ENCODE measurements at regions of chr10 and their contacts with region 1.

Region 1: DNA sequence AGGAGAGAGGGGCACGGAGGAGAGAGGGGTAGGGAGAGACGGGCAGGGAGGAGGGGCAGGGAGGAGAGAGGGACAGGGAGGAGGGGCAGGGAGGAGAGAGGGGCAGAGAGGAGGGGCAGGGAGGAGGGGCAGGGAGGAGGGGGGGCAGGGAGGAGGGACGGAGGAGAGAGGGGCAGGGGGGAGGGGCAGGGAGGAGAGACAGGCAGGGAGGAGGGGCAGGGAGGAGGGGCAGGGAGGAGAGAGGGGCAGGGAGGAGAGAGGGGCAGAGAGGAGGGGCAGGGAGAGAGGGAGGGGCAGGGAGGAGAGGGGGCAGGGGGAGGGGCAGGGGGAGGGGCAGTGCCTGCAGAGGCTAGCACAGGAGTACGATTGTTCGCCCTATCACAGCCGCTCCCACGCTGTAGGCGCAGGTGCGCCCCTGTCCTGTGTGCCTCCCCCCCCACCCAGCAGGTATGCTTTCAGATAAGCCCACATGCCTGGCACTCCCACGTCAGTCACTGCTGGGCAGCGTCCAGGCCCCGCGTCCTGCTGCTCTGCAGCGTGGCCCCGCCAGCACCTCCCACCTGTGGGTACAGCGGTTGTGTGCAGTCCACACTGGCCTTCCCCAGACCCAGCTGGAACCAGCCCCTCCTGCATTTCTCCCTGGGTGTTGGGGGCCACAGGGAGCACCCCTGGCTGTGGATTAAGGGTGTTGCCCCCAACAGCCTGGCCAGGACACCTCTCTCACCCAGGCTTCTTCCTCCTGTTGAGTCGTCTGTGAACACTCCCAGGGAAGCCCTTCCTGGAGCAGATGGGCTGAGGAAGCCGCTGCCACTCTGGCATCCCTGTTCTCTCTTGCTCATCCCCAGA is 10.8 kb downstream of the NKX6-2 start:
- DNase-seq: no peak
- H3K4me3 ChIP-seq: no peak overlapping the region
- H3K27ac ChIP-seq: no peak overlapping the region
- H3K4me1 ChIP-seq: no peaks in the 10 kb centered on the region
- H3K27me3 ChIP-seq: no peaks in the 10 kb centered on the region
- CTCF ChIP-seq: no peak

Region 2: DNA sequence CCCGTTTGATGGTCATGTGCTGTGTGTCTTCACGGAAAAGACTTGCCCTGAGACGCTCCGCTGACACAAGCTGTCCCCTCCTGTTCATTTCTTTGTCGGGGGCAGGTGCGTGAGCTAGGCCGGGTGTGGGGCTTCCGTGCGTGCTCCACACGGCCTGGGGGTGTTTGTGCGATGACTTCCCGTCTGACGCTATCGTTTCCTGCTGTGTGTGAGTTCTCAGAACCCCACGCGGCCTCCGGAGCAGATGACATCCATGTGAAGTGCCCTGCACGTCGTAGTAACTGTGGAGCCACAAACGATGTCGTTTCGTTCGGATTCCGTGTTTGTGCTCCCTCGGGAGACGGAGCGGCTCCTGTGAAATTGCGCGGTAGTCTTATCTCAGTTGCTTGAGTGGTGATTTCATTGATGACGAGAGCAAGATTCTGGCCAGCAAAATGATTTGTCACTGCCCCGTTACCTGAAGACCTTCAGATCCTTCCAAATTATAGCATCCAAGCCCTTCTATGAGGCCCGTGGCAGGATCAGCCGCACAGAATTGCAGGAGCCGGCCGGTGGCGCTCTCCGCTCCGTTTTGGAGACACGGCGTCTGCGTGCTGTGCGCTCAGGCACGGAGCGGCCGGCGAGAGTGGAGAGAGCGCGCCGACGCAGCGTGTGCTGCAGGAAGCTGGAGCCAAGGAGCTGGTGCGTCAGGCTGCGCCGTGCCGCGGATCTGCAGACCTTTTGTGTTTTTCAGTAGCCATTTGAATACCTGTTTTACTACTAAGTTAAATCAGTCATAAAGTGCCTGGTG is 84.1 kb before region 1 on chr10:
- CTCF ChIA-PET with region 1: no interaction called
- dilution Hi-C with region 1: loop called (anchors 5 kb)
- in situ Hi-C with region 1: no loop called
- intact Hi-C with region 1: no loop called
- DNase-seq: no peak
- H3K4me3 ChIP-seq: no peak overlapping the region
- H3K27ac ChIP-seq: no peak overlapping the region
- H3K4me1 ChIP-seq: no peaks in the 10 kb centered on the region
- H3K27me3 ChIP-seq: no peaks in the 10 kb centered on the region
- CTCF ChIP-seq: no peak

Region 3: GRCh38 chr10:132939957-132940790 is 165.0 kb after region 1 on chr10:
- CTCF ChIA-PET with region 1: no interaction called
- dilution Hi-C with region 1: no loop called
- in situ Hi-C with region 1: no loop called
- intact Hi-C with region 1: no loop called
- DNase-seq: no peak
- H3K4me3 ChIP-seq: no peak overlapping the region
- H3K27ac ChIP-seq: no peak overlapping the region
- H3K4me1 ChIP-seq: no peaks in the 10 kb centered on the region
- H3K27me3 ChIP-seq: no peaks in the 10 kb centered on the region
- CTCF ChIP-seq: no peak

Measured in mammary epithelial cell (primary cell).